Esophagus muscularis mucosa (tissue), 4 donors: ENCODE measurements at regions of chr14 and their contacts with region 1.

Region 1: GRCh38 chr14:74562515-74563232 is 49.4 kb downstream of the LTBP2 start:
- DNase-seq: no peak
- H3K4me3 ChIP-seq: no peak overlapping the region
- H3K27ac ChIP-seq: no peak overlapping the region
- H3K4me1 ChIP-seq: peaks cover 13 to 40% (median 32%) of the 10 kb centered on the region in 4 donors
- H3K27me3 ChIP-seq: no peaks in the 10 kb centered on the region
- CTCF ChIP-seq: peak in 1 of 3 experiments; percentile 14
- EP300 ChIP-seq: no peak
- POLR2A ChIP-seq: no peak

Region 2: GRCh38 chr14:74501135-74501614 is 61.5 kb before region 1 on chr14:
- intact Hi-C with region 1: loop called (anchors 5 kb)
- DNase-seq: no peak
- H3K4me3 ChIP-seq: no peak overlapping the region
- H3K27ac ChIP-seq: no peak overlapping the region
- H3K4me1 ChIP-seq: peaks cover 0 to 15% (median 11%) of the 10 kb centered on the region in 4 donors
- H3K27me3 ChIP-seq: no peaks in the 10 kb centered on the region
- CTCF ChIP-seq: peak; percentile 61 to 76 (median 65)
- EP300 ChIP-seq: no peak
- POLR2A ChIP-seq: no peak

Region 3: DNA sequence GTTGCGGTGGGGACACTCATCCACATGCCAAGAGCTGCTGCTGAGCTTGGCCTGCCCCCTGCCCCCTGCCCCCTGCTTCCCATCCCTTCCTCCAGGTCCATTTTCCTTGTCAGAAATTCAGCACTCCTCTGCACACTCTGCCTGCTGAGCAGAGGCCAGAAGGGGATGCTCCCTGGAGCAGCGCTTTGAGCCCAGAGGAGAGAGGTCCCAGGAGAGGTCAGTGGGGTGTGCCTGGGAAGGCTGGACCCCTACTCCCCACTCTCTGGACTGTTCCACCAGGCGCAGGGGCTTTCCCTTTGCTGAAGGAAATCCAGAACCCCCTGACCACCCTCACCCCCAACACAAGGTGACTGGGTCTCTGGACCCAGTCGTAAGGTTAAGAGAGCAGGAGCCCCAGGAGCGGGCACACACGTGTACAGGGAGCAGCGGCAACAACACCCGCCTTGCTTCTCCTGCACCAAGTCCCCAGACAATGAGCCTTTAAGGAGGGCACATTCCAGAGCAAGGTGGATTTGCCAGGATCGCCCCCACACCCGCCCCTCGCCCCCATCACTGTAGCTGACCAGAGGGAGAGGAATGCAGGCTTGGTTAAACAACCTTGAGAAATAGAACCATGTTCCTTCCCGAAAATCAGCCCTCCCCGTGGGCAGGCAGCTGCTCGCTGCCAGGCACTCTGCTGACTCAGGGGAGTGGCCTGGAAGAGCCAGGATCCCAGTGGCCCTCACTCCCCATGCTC is 38.4 kb before region 1 on chr14:
- intact Hi-C with region 1: no loop called
- DNase-seq: no peak
- H3K4me3 ChIP-seq: no peak overlapping the region
- H3K27ac ChIP-seq: no peak overlapping the region
- H3K4me1 ChIP-seq: no peaks in the 10 kb centered on the region
- H3K27me3 ChIP-seq: no peaks in the 10 kb centered on the region
- CTCF ChIP-seq: no peak
- EP300 ChIP-seq: no peak
- POLR2A ChIP-seq: no peak